Caco-2 (cell line): ENCODE measurements at regions of chr22 and their contacts with region 1.

Region 1: GRCh38 chr22:31290494-31291471 is 1.5 kb downstream of the PIK3IP1 start:
- DNase-seq: peak; percentile 90 to 92
- H3K4me3 ChIP-seq: peak overlapping the region; percentile 66
- H3K4me3 Mint-ChIP-seq: peak overlapping the region; percentile 90
- H3K27ac Mint-ChIP-seq: peak overlapping the region; percentile 87
- H3K4me1 ChIP-seq: peaks cover 9% of the 10 kb centered on the region; the same call in 1 of the 2 replicates
- H3K4me1 Mint-ChIP-seq: peaks cover 9% of the 10 kb centered on the region
- H3K27me3 ChIP-seq: no peaks in the 10 kb centered on the region
- H3K27me3 Mint-ChIP-seq: no peaks in the 10 kb centered on the region
- CTCF ChIP-seq: no peak

Region 2: GRCh38 chr22:31211862-31212730 is 78.7 kb before region 1 on chr22 and contains the start of gene LIMK2:
- CTCF ChIA-PET with region 1: interaction called, 8 read pairs
- POLR2A ChIA-PET with region 1: interaction called, 4 read pairs
- intact Hi-C with region 1: loop called (anchors 5 kb)
- DNase-seq: peak; percentile 93 to 97
- H3K4me3 ChIP-seq: peak within 1 kb of the TSS; percentile 81
- H3K4me3 Mint-ChIP-seq: peak within 1 kb of the TSS; percentile 83
- H3K27ac Mint-ChIP-seq: peak within 1 kb of the TSS; percentile 82
- H3K4me1 ChIP-seq: peaks cover 38% of the 10 kb centered on the region
- H3K4me1 Mint-ChIP-seq: peaks cover 26% of the 10 kb centered on the region
- H3K27me3 ChIP-seq: no peaks in the 10 kb centered on the region
- H3K27me3 Mint-ChIP-seq: no peaks in the 10 kb centered on the region
- CTCF ChIP-seq: peak; percentile 76 to 90
- total RNA-seq, gene LIMK2: 34.8 and 36.3 TPM in 2 replicates

Region 3: GRCh38 chr22:31248138-31248745 is 42.5 kb before region 1 on chr22:
- CTCF ChIA-PET with region 1: interaction called, 6 read pairs
- POLR2A ChIA-PET with region 1: no interaction called
- intact Hi-C with region 1: loop called (anchors 5 kb)
- DNase-seq: peak; percentile 74 to 82
- H3K4me3 ChIP-seq: peak overlapping the region; percentile 35
- H3K4me3 Mint-ChIP-seq: peak overlapping the region; percentile 63
- H3K27ac Mint-ChIP-seq: no peak overlapping the region
- H3K4me1 ChIP-seq: peaks cover 73% of the 10 kb centered on the region
- H3K4me1 Mint-ChIP-seq: peaks cover 25% of the 10 kb centered on the region
- H3K27me3 ChIP-seq: no peaks in the 10 kb centered on the region
- H3K27me3 Mint-ChIP-seq: no peaks in the 10 kb centered on the region
- CTCF ChIP-seq: no peak

Region 4: GRCh38 chr22:31272522-31273446 is 18.0 kb before region 1 on chr22:
- CTCF ChIA-PET with region 1: interaction called, 25 read pairs
- POLR2A ChIA-PET with region 1: interaction called, 5 read pairs
- intact Hi-C with region 1: no loop called
- DNase-seq: peak; percentile 60 to 73
- H3K4me3 ChIP-seq: no peak overlapping the region
- H3K4me3 Mint-ChIP-seq: no peak overlapping the region
- H3K27ac Mint-ChIP-seq: no peak overlapping the region
- H3K4me1 ChIP-seq: peaks cover 30% of the 10 kb centered on the region
- H3K4me1 Mint-ChIP-seq: peaks cover 23% of the 10 kb centered on the region
- H3K27me3 ChIP-seq: no peaks in the 10 kb centered on the region
- H3K27me3 Mint-ChIP-seq: no peaks in the 10 kb centered on the region
- CTCF ChIP-seq: peak; percentile 66

Region 5: GRCh38 chr22:31313366-31314147 is 22.8 kb after region 1 on chr22:
- CTCF ChIA-PET with region 1: interaction called, 20 read pairs
- POLR2A ChIA-PET with region 1: no interaction called
- intact Hi-C with region 1: loop called (anchors 1 kb)
- DNase-seq: peak; percentile 66 to 74
- H3K4me3 ChIP-seq: no peak overlapping the region
- H3K4me3 Mint-ChIP-seq: no peak overlapping the region
- H3K27ac Mint-ChIP-seq: peak overlapping the region; percentile 65
- H3K4me1 ChIP-seq: no peaks in the 10 kb centered on the region
- H3K4me1 Mint-ChIP-seq: peaks cover 7% of the 10 kb centered on the region
- H3K27me3 ChIP-seq: no peaks in the 10 kb centered on the region
- H3K27me3 Mint-ChIP-seq: no peaks in the 10 kb centered on the region
- CTCF ChIP-seq: peak; percentile 71 to 85

Region 6: DNA sequence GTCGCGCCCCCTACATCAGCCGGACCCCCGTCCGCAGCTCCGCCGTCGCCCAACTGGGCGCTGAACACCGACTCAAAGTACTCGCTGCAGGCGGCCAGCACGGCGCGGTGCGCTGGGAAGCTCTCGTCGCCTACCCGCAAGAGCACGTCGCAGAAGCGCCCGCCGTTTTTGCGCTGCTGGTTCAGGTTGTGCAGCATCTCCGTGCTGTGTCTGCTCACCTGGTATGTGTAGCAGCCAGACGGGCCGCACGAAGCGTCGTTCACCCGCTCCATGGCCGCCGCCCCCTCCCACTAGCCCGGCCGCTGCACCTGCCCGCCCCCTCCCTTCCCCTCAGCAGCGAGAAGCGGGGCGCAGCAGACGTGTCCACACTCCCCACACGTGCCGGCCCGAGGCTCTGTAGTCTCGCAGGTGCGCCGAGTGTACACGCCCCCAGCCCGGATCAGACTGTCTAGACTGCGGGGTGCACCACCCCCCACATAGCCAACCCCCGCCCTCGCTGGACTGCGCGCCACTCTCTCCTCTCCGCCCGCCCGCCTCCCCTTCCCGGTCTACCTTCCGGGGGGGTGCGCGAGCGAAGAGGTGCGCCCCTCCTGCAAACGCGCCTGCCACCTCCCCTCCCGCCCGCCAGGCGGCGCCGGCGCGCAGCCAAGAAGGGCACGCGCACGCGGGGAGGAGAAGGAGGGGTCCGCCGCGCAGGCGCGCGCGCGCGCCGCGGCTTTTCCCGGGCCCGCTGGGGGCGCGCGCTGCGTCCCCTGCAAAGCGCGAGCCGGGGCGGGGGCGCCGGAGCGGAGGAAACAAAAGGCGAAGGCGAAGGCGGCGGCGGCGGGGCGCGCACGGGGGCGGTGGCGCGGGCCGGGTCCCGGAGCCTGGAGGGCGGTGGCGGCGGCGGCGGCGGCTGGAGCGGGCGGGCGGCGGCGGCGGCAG is 54.8 kb after region 1 on chr22:
- CTCF ChIA-PET with region 1: interaction called, 4 read pairs
- POLR2A ChIA-PET with region 1: interaction called, 14 read pairs
- intact Hi-C with region 1: no loop called
- DNase-seq: peak; percentile 81 to 90
- H3K4me3 ChIP-seq: peak overlapping the region; percentile 86
- H3K4me3 Mint-ChIP-seq: peak overlapping the region; percentile 87
- H3K27ac Mint-ChIP-seq: peak overlapping the region; percentile 64
- H3K4me1 ChIP-seq: peaks cover 29% of the 10 kb centered on the region
- H3K4me1 Mint-ChIP-seq: peaks cover 21% of the 10 kb centered on the region
- H3K27me3 ChIP-seq: no peaks in the 10 kb centered on the region
- H3K27me3 Mint-ChIP-seq: no peaks in the 10 kb centered on the region
- CTCF ChIP-seq: peak; percentile 86 to 94